Activated naive CD4-positive, alpha-beta T cell treated with anti-CD3 and anti-CD28 coated beads for 36 hours (primary cell): ENCODE measurements at regions of chr2 and their contacts with region 1.

Region 1: GRCh38 chr2:172806493-172806892 is 70.8 kb downstream of the RAPGEF4 start:
- DNase-seq: peak; percentile 9
- H3K4me3 Mint-ChIP-seq: no peak overlapping the region
- H3K27ac Mint-ChIP-seq: no peak overlapping the region
- H3K4me1 Mint-ChIP-seq: no peaks in the 10 kb centered on the region
- H3K27me3 Mint-ChIP-seq: peaks cover 2% of the 10 kb centered on the region

Region 2: GRCh38 chr2:172864182-172864581 is 57.7 kb after region 1 on chr2:
- CTCF ChIA-PET with region 1: interaction called, 3 read pairs
- intact Hi-C with region 1: loop called (anchors 2 kb)
- DNase-seq: peak; percentile 78
- H3K4me3 Mint-ChIP-seq: no peak overlapping the region
- H3K27ac Mint-ChIP-seq: no peak overlapping the region
- H3K4me1 Mint-ChIP-seq: no peaks in the 10 kb centered on the region
- H3K27me3 Mint-ChIP-seq: peaks cover 16% of the 10 kb centered on the region

Region 3: DNA sequence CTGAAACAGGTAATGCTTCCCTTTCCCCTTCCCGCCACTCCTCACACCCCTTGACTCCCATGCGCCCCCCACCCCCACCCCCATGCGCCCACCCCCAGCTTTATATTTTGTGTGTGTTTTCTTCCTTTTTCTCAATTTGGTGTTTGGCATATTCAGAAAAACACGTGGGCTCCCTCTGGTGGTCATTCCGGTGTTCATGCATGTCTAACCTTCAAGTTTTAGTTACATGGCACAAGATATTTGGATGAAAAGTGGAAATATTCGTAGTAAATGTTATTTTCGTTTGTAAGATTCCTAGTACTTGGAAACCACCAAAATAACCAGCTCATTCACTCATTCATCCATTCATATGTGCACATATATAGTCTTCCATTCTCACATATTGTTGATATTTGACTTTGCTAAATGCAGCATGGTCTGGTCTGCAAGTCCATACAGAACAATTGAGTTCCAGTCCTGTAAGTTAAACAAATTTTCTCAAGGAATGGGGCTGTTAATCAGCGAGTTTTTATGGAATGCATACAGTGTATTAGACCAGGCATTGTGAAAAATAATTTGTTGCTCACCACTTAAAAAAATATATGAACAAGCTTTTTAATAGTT is 125.5 kb after region 1 on chr2:
- CTCF ChIA-PET with region 1: interaction called, 46 read pairs
- intact Hi-C with region 1: loop called (anchors 1 kb)
- DNase-seq: peak; percentile 85
- H3K4me3 Mint-ChIP-seq: no peak overlapping the region
- H3K27ac Mint-ChIP-seq: no peak overlapping the region
- H3K4me1 Mint-ChIP-seq: peaks cover 9% of the 10 kb centered on the region
- H3K27me3 Mint-ChIP-seq: no peaks in the 10 kb centered on the region

Region 4: GRCh38 chr2:172953970-172954852 is 147.7 kb after region 1 on chr2:
- CTCF ChIA-PET with region 1: no interaction called
- intact Hi-C with region 1: no loop called
- DNase-seq: no peak
- H3K4me3 Mint-ChIP-seq: no peak overlapping the region
- H3K27ac Mint-ChIP-seq: no peak overlapping the region
- H3K4me1 Mint-ChIP-seq: peaks cover 3% of the 10 kb centered on the region
- H3K27me3 Mint-ChIP-seq: no peaks in the 10 kb centered on the region

Region 5: GRCh38 chr2:173021939-173022371 is 215.5 kb after region 1 on chr2:
- CTCF ChIA-PET with region 1: interaction called, 4 read pairs
- intact Hi-C with region 1: loop called (anchors 5 kb)
- DNase-seq: no peak
- H3K4me3 Mint-ChIP-seq: no peak overlapping the region
- H3K27ac Mint-ChIP-seq: no peak overlapping the region
- H3K4me1 Mint-ChIP-seq: no peaks in the 10 kb centered on the region
- H3K27me3 Mint-ChIP-seq: no peaks in the 10 kb centered on the region